ENCODE measurements at regions of chr3 and their contacts with region 1.

Region 1: GRCh38 chr3:8678751-8679150 is 34.2 kb upstream of the SSUH2 start:
- DNase-seq: no peak
- ATAC-seq: no peak
- H3K4me3 ChIP-seq: no peak overlapping the region
- H3K27ac ChIP-seq: no peak overlapping the region
- H3K4me1 ChIP-seq: peaks cover 32% of the 10 kb centered on the region
- H3K27me3 ChIP-seq: no peaks in the 10 kb centered on the region
- CTCF ChIP-seq: no peak

Region 2: GRCh38 chr3:8490079-8490552 is 188.6 kb before region 1 on chr3:
- CTCF ChIA-PET with region 1: no interaction called
- POLR2A ChIA-PET with region 1: no interaction called
- intact Hi-C with region 1: no loop called
- DNase-seq: peak; percentile 61
- ATAC-seq: no peak
- H3K4me3 ChIP-seq: no peak overlapping the region
- H3K27ac ChIP-seq: peak overlapping the region; percentile 38
- H3K4me1 ChIP-seq: peaks cover 29% of the 10 kb centered on the region
- H3K27me3 ChIP-seq: no peaks in the 10 kb centered on the region
- CTCF ChIP-seq: no peak

Region 3: DNA sequence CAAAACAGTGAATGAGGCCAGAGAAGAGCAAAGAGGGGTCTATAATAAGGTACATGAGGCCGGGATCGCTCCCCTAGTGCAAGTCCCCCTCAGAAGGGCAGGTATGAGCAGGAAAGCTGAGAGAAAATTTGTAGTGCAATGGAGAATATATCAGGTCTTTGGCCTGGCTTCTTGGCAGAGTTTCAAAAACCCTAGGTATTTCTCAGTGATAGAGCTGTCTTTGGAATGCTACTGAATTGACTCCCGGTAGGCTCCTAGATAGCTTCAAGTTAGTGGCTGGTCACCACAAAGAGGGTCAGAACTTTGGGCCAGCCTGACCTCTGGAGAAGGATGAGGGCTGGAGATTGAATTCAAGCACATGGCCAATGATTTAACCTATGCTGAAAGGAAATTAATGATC is 121.3 kb after region 1 on chr3:
- CTCF ChIA-PET with region 1: no interaction called
- POLR2A ChIA-PET with region 1: no interaction called
- intact Hi-C with region 1: no loop called
- DNase-seq: no peak
- ATAC-seq: no peak
- H3K4me3 ChIP-seq: no peak overlapping the region
- H3K27ac ChIP-seq: no peak overlapping the region
- H3K4me1 ChIP-seq: no peaks in the 10 kb centered on the region
- H3K27me3 ChIP-seq: no peaks in the 10 kb centered on the region
- CTCF ChIP-seq: no peak

Region 4: DNA sequence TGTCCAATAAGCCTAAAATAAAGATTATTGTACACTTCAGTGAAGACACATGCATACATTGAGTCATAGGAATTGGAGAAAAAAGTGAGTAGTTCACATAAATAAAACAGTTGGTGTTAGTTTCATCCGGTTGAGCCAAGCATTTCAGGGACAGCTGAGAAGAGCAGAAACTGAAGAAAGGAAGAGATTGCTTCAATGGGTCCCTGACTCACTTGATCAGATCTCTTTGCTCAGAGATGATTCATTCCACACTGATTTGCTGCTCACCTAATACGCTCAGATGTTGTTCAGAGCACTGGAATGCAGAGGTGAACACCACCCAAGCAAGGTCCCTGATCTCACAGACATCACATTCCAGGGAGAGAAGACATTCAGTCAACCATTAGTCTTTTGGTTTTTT is 190.9 kb after region 1 on chr3:
- CTCF ChIA-PET with region 1: no interaction called
- POLR2A ChIA-PET with region 1: no interaction called
- intact Hi-C with region 1: loop called (anchors 5 kb)
- DNase-seq: peak; percentile 99
- ATAC-seq: peak; percentile 95
- H3K4me3 ChIP-seq: no peak overlapping the region
- H3K27ac ChIP-seq: peak overlapping the region; percentile 94
- H3K4me1 ChIP-seq: peaks cover 57% of the 10 kb centered on the region
- H3K27me3 ChIP-seq: no peaks in the 10 kb centered on the region
- CTCF ChIP-seq: no peak

Measured in PC-3 (cell line).